GM12878 (cell line): ENCODE measurements at regions of chr7 and their contacts with region 1.

Region 1: DNA sequence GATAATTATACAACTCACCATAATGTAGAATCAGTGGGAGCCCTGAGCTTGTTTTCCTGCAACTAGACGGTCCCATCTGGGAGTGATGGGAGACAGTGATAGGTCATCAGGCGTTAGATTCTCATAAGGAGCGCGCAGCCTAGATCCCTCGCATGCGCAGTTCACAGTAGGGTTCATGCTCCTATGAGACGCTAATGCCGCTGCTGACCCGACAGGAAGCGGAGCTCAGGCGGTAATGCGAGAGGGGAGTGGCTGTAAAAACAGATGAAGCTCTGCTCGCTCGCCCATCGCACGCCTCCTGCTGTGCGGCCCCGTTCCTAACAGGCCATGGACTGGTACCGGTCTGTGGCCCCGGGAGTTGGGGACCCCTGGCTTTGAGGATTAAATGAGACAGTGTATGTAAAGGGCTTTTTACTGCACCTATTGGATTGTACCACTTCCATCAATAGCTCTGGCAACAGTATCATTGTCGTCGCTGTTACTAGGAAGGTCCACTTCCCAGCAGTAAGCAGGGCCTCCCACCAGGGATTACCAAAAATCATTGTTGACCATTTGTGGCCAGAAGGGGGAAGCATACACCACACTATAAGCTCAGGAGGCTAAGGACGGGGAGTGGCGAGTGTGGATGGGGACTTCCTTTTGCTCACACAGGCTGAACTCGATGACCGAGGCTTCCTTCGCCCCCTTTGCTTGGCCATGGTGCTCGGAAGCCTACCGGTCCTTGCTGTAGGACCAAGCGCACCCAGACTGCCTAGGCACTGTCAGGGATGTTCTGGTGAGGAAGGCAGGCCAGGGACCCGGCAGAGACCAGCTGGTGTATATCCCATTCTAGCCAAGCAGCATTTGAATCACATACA is 26.4 kb downstream of the AKR1B1 start:
- DNase-seq: peak; percentile 69
- ATAC-seq: peak; percentile 98
- H3K4me3 ChIP-seq: peak overlapping the region; percentile 65; the same call in 1 of the 2 replicates
- H3K27ac ChIP-seq: no peak overlapping the region
- H3K4me1 ChIP-seq: peaks cover 5% of the 10 kb centered on the region
- H3K27me3 ChIP-seq: no peaks in the 10 kb centered on the region
- CTCF ChIP-seq: peak; percentile 53 to 91 (median 73)
- EP300 ChIP-seq: no peak
- POLR2A ChIP-seq: no peak
- RAD21 ChIP-seq: peak; percentile 95

Region 2: GRCh38 chr7:133919810-133920209 is 512.7 kb before region 1 on chr7:
- CTCF ChIA-PET with region 1: no interaction called
- POLR2A ChIA-PET with region 1: no interaction called
- RAD21 ChIA-PET with region 1: no interaction called
- SMC1A ChIA-PET with region 1: no interaction called
- in situ Hi-C with region 1: no loop called
- intact Hi-C with region 1: no loop called
- DNase-seq: no peak
- ATAC-seq: no peak
- H3K4me3 ChIP-seq: no peak overlapping the region
- H3K27ac ChIP-seq: no peak overlapping the region
- H3K4me1 ChIP-seq: no peaks in the 10 kb centered on the region
- H3K27me3 ChIP-seq: no peaks in the 10 kb centered on the region
- CTCF ChIP-seq: no peak
- EP300 ChIP-seq: no peak
- POLR2A ChIP-seq: no peak
- RAD21 ChIP-seq: no peak

Region 3: GRCh38 chr7:134120405-134120804 is 312.1 kb before region 1 on chr7:
- CTCF ChIA-PET with region 1: no interaction called
- POLR2A ChIA-PET with region 1: no interaction called
- RAD21 ChIA-PET with region 1: no interaction called
- SMC1A ChIA-PET with region 1: no interaction called
- in situ Hi-C with region 1: no loop called
- intact Hi-C with region 1: no loop called
- DNase-seq: no peak
- ATAC-seq: no peak
- H3K4me3 ChIP-seq: no peak overlapping the region
- H3K27ac ChIP-seq: no peak overlapping the region
- H3K4me1 ChIP-seq: no peaks in the 10 kb centered on the region
- H3K27me3 ChIP-seq: no peaks in the 10 kb centered on the region
- CTCF ChIP-seq: no peak
- EP300 ChIP-seq: no peak
- POLR2A ChIP-seq: no peak
- RAD21 ChIP-seq: no peak

Region 4: GRCh38 chr7:134327896-134328295 is 104.6 kb before region 1 on chr7:
- CTCF ChIA-PET with region 1: no interaction called
- POLR2A ChIA-PET with region 1: no interaction called
- RAD21 ChIA-PET with region 1: no interaction called
- SMC1A ChIA-PET with region 1: no interaction called
- in situ Hi-C with region 1: no loop called
- intact Hi-C with region 1: no loop called
- DNase-seq: peak; percentile 42
- ATAC-seq: peak; percentile 99
- H3K4me3 ChIP-seq: no peak overlapping the region
- H3K27ac ChIP-seq: no peak overlapping the region
- H3K4me1 ChIP-seq: no peaks in the 10 kb centered on the region; the same call in 1 of the 2 replicates
- H3K27me3 ChIP-seq: no peaks in the 10 kb centered on the region; a peak in 1 of 4 replicates
- CTCF ChIP-seq: peak; percentile 70 to 74 (median 74)
- EP300 ChIP-seq: no peak
- POLR2A ChIP-seq: no peak
- RAD21 ChIP-seq: peak; percentile 83

Region 5: DNA sequence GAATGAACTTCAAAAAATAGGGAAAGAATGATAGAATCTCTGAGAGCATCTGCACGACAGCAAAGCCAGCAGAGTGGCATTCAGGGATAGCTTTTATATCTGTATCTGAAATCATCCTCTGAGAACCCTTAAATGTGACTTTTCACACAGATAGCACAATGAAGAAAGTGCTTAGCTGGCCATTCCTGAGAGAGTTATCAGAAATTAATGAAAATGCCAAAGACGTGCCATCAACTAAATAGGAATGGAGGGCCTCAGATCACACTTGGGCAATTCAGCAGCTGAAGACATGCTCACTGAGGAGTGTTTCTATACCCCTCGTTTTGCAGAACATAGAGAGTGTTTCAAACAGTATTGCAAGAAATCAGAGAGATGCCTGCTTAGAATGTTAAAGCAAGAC is 25.2 kb before region 1 on chr7:
- CTCF ChIA-PET with region 1: no interaction called
- POLR2A ChIA-PET with region 1: no interaction called
- RAD21 ChIA-PET with region 1: no interaction called
- SMC1A ChIA-PET with region 1: no interaction called
- in situ Hi-C with region 1: no loop called
- intact Hi-C with region 1: no loop called
- DNase-seq: no peak
- ATAC-seq: no peak
- H3K4me3 ChIP-seq: no peak overlapping the region
- H3K27ac ChIP-seq: no peak overlapping the region
- H3K4me1 ChIP-seq: no peaks in the 10 kb centered on the region
- H3K27me3 ChIP-seq: no peaks in the 10 kb centered on the region
- CTCF ChIP-seq: no peak
- EP300 ChIP-seq: no peak
- POLR2A ChIP-seq: no peak
- RAD21 ChIP-seq: no peak

Region 6: GRCh38 chr7:134458806-134459698 is 26.5 kb after region 1 on chr7 and contains the start of gene AKR1B1:
- CTCF ChIA-PET with region 1: interaction called, 35 read pairs
- POLR2A ChIA-PET with region 1: interaction called, 3 read pairs
- RAD21 ChIA-PET with region 1: interaction called, 20 read pairs
- SMC1A ChIA-PET with region 1: interaction called, 19 read pairs
- in situ Hi-C with region 1: no loop called
- intact Hi-C with region 1: no loop called
- DNase-seq: peak; percentile 64
- ATAC-seq: peak; percentile 97
- H3K4me3 ChIP-seq: peak within 1 kb of the TSS; percentile 75
- H3K27ac ChIP-seq: peak within 1 kb of the TSS; percentile 79
- H3K4me1 ChIP-seq: peaks cover 9% of the 10 kb centered on the region; the same call in 1 of the 2 replicates
- H3K27me3 ChIP-seq: no peaks in the 10 kb centered on the region
- CTCF ChIP-seq: peak; percentile 58 to 81 (median 78)
- EP300 ChIP-seq: no peak
- POLR2A ChIP-seq: peak; percentile 81
- RAD21 ChIP-seq: no peak
- polyA plus RNA-seq, gene AKR1B1: 165 to 180 TPM

Region 7: DNA sequence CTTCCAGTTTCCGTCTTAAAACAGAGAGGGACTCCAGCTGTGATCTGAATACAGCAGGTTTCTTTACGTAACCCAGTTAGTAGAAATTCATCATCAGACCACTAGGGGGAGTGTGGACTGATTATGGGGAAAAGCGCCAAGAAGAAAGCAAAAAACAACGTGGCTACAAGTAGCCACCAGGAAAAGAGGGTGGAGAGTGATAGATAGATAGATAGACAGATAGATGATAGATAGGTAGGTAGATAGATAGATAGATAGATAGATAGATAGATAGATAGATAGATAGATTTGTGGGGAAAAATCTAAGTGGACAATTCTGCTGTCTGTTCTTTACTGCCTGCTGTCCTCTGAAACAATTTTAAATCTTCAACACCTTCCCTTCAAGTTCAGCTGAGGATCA is 82.1 kb after region 1 on chr7:
- CTCF ChIA-PET with region 1: interaction called, 129 read pairs
- POLR2A ChIA-PET with region 1: interaction called, 5 read pairs
- RAD21 ChIA-PET with region 1: interaction called, 23 read pairs
- SMC1A ChIA-PET with region 1: interaction called, 75 read pairs
- in situ Hi-C with region 1: loop called (anchors 5 kb)
- intact Hi-C with region 1: loop called (anchors 1 kb)
- DNase-seq: peak; percentile 13
- ATAC-seq: peak; percentile 84
- H3K4me3 ChIP-seq: no peak overlapping the region
- H3K27ac ChIP-seq: no peak overlapping the region
- H3K4me1 ChIP-seq: no peaks in the 10 kb centered on the region
- H3K27me3 ChIP-seq: no peaks in the 10 kb centered on the region; a peak in 1 of 4 replicates
- CTCF ChIP-seq: peak; percentile 63 to 76 (median 73)
- EP300 ChIP-seq: no peak
- POLR2A ChIP-seq: no peak
- RAD21 ChIP-seq: peak; percentile 69

Region 8: GRCh38 chr7:134599371-134599770 is 166.8 kb after region 1 on chr7:
- CTCF ChIA-PET with region 1: interaction called, 23 read pairs
- POLR2A ChIA-PET with region 1: interaction called, 4 read pairs
- RAD21 ChIA-PET with region 1: interaction called, 3 read pairs
- SMC1A ChIA-PET with region 1: interaction called, 62 read pairs
- in situ Hi-C with region 1: loop called (anchors 5 kb)
- intact Hi-C with region 1: no loop called
- DNase-seq: no peak
- ATAC-seq: no peak
- H3K4me3 ChIP-seq: no peak overlapping the region
- H3K27ac ChIP-seq: no peak overlapping the region
- H3K4me1 ChIP-seq: no peaks in the 10 kb centered on the region
- H3K27me3 ChIP-seq: no peaks in the 10 kb centered on the region
- CTCF ChIP-seq: no peak
- EP300 ChIP-seq: no peak
- POLR2A ChIP-seq: no peak
- RAD21 ChIP-seq: no peak

Region 9: GRCh38 chr7:134943764-134944400 is 511.4 kb after region 1 on chr7:
- CTCF ChIA-PET with region 1: interaction called, 14 read pairs
- POLR2A ChIA-PET with region 1: no interaction called
- RAD21 ChIA-PET with region 1: interaction called, 7 read pairs
- SMC1A ChIA-PET with region 1: interaction called, 6 read pairs
- in situ Hi-C with region 1: no loop called
- intact Hi-C with region 1: no loop called
- DNase-seq: no peak
- ATAC-seq: peak; percentile 97
- H3K4me3 ChIP-seq: no peak overlapping the region
- H3K27ac ChIP-seq: no peak overlapping the region
- H3K4me1 ChIP-seq: no peaks in the 10 kb centered on the region
- H3K27me3 ChIP-seq: no peaks in the 10 kb centered on the region
- CTCF ChIP-seq: peak; percentile 49 to 66 (median 55)
- EP300 ChIP-seq: no peak
- POLR2A ChIP-seq: no peak
- RAD21 ChIP-seq: peak; percentile 88